Posterior vena cava (tissue), 2 donors: ENCODE measurements at regions of chr4 and their contacts with region 1.

Region 1: DNA sequence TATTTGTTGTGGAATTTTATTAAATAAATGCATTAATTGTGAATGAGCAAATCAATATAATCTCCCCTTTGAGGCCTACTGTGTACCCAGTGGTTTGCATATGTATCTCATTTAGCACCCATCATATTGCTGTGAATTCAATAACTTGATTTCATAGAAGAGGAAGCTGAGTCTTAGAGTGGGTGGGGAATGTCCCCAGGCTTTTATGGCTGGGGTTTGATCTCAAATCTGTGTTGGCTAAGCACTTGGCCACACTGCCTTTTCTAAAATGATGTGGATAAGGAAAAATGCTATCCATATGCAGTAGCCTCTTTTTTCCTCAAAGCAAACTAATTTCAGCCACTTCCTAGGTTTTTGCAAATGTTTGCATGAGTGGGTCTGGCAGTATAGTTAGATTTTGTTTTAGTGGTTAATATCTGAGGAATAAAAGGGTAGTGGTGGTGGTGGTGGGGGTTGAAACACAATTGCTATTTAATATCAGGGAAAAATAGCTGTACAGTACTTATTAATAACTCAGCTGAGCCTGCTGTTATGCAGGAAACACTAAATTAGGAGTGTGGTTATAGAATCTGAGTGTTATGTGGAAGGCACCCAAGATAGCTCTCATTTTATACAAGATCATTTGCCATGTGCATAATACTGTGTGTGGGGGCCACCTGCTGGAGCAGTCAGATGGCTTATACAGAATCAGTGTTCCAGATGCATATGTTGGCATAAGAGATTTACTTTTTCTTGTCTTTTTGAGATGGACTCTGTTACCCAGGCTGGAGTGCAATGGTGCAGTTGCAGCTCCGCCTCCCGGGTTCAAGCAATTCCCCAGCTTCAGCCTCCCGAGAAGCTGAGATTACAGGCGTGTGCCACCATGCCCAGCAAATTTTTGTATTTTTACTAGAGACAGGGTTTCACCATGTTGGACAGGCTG is 108.0 kb downstream of the TMEM131L start:
- DNase-seq: peak; percentile 86

Region 2: GRCh38 chr4:153142700-153143438 is 431.3 kb before region 1 on chr4:
- intact Hi-C with region 1: loop called in 1 of 2 experiments (anchors 5 kb)
- DNase-seq: no peak

Region 3: DNA sequence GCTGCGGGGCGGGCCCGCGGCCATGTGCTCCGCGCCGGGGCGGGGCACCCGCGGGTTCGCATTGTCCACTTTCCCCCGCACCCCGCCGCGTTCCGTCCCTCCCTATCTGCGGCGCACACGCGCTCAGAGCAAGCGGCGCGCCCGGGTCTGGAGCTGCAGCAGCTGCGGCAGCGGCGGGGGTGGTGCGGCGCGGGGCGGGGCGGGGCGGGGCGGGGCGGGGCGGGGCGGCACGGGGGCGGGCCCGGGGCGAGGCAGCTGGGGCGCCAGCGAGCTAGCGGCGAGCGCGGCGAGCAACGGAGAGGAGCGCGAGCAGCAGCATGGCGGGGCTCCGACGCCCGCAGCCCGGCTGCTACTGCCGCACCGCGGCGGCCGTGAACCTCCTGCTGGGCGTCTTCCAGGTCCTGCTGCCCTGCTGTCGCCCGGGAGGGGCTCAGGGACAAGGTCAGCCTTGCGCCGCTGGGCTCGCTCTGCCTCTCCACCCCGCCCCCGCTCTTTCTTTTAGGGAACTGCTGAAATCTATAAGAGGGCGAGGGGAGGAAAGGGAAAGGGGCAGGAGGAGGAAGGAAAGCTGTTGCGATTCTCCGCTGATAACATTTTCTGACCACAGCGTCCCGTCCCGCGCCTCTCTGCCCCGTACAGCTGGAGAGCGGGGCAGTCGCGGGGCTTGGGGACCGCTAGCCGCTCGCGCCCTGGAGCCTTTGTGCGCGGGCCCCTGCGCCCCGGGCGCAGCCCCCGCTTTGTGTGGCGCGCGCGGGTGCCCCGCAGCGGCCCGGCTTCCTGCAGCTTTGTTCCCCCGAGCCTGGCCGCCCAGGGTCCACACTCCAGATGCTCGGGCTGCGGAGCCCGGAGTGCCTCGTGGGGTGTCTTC is 107.8 kb before region 1 on chr4 and contains the start of gene TMEM131L:
- intact Hi-C with region 1: loop called (anchors 5 to 10 kb)
- DNase-seq: peak; percentile 90
- total RNA-seq, gene TMEM131L: 11.4 to 12.0 TPM